WTC11 (cell line): ENCODE measurements at regions of chr1 and their contacts with region 1.

Region 1: DNA sequence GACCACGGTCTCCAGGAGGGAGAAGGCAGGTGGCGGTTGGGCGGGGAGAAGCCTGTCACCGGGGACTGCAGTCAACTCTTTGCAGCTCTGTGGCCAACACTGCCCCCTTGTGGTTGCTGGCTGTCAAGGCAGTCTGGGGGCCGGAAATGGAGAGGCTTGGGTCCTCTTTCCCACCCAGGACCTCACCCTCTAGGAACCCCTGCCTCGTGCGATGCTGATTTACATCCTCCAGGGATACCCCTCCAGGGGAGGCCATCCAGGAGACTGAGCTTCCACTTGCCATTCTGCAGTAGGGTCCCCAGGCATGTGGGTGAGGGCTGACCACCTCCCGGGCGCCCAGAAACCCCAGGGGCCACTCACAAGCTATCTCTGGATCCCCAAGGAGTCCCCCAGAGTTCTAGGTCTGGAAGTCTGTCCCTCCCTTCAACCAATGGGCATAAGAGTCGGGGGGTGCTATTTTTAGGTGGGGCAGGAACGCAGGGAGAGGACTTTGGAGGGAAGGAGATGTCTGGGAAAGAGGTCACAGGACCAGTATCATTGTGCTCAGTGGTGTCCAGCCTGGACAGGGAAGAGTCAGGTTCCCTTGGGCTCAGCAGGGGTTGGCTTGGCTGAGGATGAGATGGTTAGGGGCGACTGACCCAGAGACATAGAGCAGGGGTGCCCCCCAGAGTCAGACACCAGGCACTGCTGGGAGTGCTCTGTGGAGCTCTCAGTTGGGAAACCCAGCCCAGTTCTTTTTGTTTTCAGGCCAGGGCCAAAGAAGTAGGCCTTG is 7.1 kb upstream of the GPR61 start:
- DNase-seq: peak; percentile 96
- ATAC-seq: peak; percentile 91
- H3K4me3 Mint-ChIP-seq: peak overlapping the region; percentile 38; the same call in 1 of the 2 replicates
- H3K27ac Mint-ChIP-seq: peak overlapping the region; percentile 8; the same call in 1 of the 2 replicates
- H3K4me1 Mint-ChIP-seq: peaks cover 10% of the 10 kb centered on the region
- H3K27me3 Mint-ChIP-seq: peaks cover 8% of the 10 kb centered on the region
- CTCF ChIP-seq: peak; percentile 97

Region 2: GRCh38 chr1:109277434-109278204 is 254.9 kb before region 1 on chr1:
- CTCF ChIA-PET with region 1: interaction called, 18 read pairs
- POLR2A ChIA-PET with region 1: no interaction called
- DNase-seq: peak; percentile 91
- ATAC-seq: peak; percentile 86
- H3K4me3 Mint-ChIP-seq: no peak overlapping the region
- H3K27ac Mint-ChIP-seq: peak overlapping the region; percentile 85
- H3K4me1 Mint-ChIP-seq: peaks cover 37% of the 10 kb centered on the region
- H3K27me3 Mint-ChIP-seq: no peaks in the 10 kb centered on the region; the same call in 1 of the 2 replicates
- CTCF ChIP-seq: peak; percentile 95

Region 3: DNA sequence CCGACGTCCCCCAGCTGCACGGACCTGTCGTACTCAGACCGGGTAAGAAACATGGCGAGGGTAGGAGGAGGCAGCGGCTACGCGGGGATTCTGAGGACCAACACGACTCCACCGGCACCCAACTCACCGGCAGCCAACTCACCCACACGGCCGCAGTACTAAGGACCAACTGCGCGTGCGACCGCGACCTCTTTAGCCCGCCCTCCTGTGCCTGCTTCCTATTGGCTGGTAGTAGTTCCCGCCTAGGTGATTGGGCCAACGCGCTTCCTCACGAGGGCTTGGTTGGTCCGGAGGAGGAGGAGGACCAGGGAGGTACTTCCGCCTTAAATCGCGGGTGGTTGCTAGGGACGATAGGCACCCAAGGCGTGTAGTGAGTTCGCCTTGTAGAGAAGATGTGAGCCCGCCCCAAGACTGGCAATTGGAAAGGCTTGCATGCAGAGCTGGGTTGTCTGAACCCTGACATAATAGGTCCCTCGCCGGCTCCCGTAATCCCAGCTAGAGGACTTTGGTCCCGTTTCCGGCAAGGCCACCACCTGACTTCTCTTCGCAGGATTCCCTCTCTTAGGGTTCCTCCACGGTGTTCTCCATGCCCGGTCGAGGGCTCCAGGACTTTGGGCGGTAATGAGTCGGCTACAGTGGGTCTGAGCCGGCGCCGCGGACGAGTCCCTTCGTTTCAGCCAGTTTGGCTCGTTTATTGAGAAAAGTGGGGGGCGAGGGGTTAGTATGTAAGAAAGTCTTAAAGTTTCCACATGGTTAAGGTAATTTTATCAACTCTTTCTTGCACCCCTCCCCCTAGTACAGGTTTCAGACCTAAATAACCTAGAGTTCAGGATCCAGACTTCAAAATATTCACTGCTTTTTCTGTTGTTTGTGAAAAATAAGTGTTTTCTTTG is 106.0 kb before region 1 on chr1 and contains the start of gene PSMA5:
- CTCF ChIA-PET with region 1: interaction called, 14 read pairs
- POLR2A ChIA-PET with region 1: interaction called, 4 read pairs
- DNase-seq: peak; percentile 93
- ATAC-seq: peak; percentile 98
- H3K4me3 Mint-ChIP-seq: peak within 1 kb of the TSS; percentile 88
- H3K27ac Mint-ChIP-seq: peak within 1 kb of the TSS; percentile 90
- H3K4me1 Mint-ChIP-seq: peaks cover 27% of the 10 kb centered on the region
- H3K27me3 Mint-ChIP-seq: no peaks in the 10 kb centered on the region
- CTCF ChIP-seq: no peak
- total RNA-seq, gene PSMA5: 115 to 150 TPM (median 119 TPM) in 3 replicates

Region 4: DNA sequence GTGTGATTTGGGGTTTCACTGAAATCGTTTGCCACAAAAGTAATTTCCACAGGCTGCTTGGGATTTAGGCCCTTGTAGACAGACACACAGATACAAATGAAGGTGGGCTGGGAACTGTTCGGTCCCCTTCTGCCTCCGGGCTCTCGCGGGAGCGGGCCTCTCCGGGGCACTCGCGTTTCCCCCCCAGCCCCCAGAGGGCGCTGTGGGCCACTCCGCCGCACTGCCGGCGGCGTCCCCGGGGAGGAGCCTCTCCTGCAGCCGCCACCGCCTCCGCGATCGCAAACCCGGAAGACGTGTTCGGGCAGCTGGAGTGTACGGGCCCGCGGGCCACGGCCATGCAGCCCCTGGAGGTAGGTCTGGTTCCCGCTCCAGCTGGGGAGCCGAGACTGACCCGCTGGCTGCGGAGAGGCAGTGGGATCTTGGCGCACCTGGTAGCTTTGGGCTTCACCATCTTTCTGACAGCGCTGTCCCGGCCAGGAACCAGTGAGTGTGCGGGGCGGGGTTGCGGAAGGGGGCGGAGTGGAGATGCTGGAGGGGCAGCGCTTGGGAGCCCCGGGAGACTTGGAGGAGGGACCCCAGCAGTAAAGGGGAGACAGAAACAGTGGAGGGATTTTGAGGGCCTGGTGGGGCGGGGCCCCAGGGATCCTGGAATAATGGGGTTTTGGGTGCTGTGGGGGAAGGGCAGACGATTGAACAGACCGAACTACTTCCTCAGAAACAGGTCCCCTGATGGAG is 38.6 kb before region 1 on chr1 and contains the start of gene CYB561D1:
- CTCF ChIA-PET with region 1: interaction called, 740 read pairs
- POLR2A ChIA-PET with region 1: interaction called, 6 read pairs
- DNase-seq: peak; percentile 90
- ATAC-seq: peak; percentile 81
- H3K4me3 Mint-ChIP-seq: peak within 1 kb of the TSS; percentile 90
- H3K27ac Mint-ChIP-seq: 0 out of 2 replicates have a peak within 1 kb of the TSS, but pooled peaks have one; percentile 60
- H3K4me1 Mint-ChIP-seq: peaks cover 22% of the 10 kb centered on the region
- H3K27me3 Mint-ChIP-seq: no peaks in the 10 kb centered on the region
- CTCF ChIP-seq: peak; percentile 84
- total RNA-seq, gene CYB561D1: 5.1 to 6.7 TPM (median 6.5 TPM) in 3 replicates

Region 5: GRCh38 chr1:109516872-109517271 is 15.7 kb before region 1 on chr1:
- CTCF ChIA-PET with region 1: interaction called, 56 read pairs
- POLR2A ChIA-PET with region 1: no interaction called
- DNase-seq: no peak
- ATAC-seq: no peak
- H3K4me3 Mint-ChIP-seq: no peak overlapping the region
- H3K27ac Mint-ChIP-seq: no peak overlapping the region
- H3K4me1 Mint-ChIP-seq: no peaks in the 10 kb centered on the region
- H3K27me3 Mint-ChIP-seq: peaks cover 12% of the 10 kb centered on the region
- CTCF ChIP-seq: no peak

Region 6: GRCh38 chr1:109687616-109688499 is 155.3 kb after region 1 on chr1 and contains the start of gene GSTM1:
- CTCF ChIA-PET with region 1: no interaction called
- POLR2A ChIA-PET with region 1: no interaction called
- DNase-seq: no peak
- ATAC-seq: no peak
- H3K4me3 Mint-ChIP-seq: no peak within 1 kb of the TSS
- H3K27ac Mint-ChIP-seq: no peak within 1 kb of the TSS
- H3K4me1 Mint-ChIP-seq: no peaks in the 10 kb centered on the region
- H3K27me3 Mint-ChIP-seq: no peaks in the 10 kb centered on the region
- CTCF ChIP-seq: no peak
- total RNA-seq, gene GSTM1: not detected in 3 replicates

Region 7: GRCh38 chr1:109984456-109985275 is 452.1 kb after region 1 on chr1 and contains the start of gene AHCYL1:
- CTCF ChIA-PET with region 1: no interaction called
- POLR2A ChIA-PET with region 1: no interaction called
- DNase-seq: peak; percentile 99
- ATAC-seq: peak; percentile 93
- H3K4me3 Mint-ChIP-seq: peak within 1 kb of the TSS; percentile 96
- H3K27ac Mint-ChIP-seq: peak within 1 kb of the TSS; percentile 93
- H3K4me1 Mint-ChIP-seq: peaks cover 42% of the 10 kb centered on the region
- H3K27me3 Mint-ChIP-seq: no peaks in the 10 kb centered on the region; the same call in 1 of the 2 replicates
- CTCF ChIP-seq: peak; percentile 92
- total RNA-seq, gene AHCYL1: 92.1 to 99.4 TPM (median 98.6 TPM) in 3 replicates

Region 8: DNA sequence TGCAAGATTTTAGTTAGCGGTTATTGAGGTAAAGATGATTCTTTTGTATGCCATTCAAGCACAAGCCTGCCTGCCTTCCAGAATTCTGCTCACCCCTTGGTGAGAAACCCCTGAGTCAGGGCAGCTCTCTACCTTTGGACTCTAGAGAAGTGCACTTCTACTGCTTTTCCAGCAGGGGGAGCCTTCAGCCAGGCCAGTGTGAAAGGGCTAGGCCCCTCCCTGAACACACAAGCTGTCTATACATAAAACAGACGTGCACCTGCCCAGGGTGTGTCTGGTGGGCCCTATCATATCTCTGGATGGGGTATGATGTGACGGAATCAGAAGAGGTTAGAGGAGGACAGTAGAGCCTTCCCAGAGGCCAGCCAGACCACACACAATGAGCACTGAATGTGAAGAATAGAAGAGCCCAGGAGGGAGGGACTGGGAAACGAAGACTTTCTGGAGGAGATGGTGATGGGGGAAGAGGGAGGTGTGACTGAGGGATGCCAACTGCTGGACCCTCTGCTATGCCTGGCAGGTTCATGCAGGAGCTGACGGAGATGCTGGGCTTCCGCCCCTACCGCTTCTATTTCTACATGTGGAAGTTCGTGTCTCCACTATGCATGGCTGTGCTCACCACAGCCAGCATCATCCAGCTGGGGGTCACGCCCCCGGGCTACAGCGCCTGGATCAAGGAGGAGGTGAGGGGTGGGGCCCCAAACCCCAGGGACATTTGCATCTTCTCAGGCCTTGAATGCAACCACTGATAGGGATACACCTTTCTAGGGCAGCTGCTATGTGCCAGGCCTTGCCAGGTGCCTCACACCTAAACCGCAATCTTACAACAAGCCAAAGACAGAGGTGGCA is 664.6 kb after region 1 on chr1:
- CTCF ChIA-PET with region 1: no interaction called
- POLR2A ChIA-PET with region 1: no interaction called
- DNase-seq: peak; percentile 42
- ATAC-seq: peak; percentile 95
- H3K4me3 Mint-ChIP-seq: no peak overlapping the region
- H3K27ac Mint-ChIP-seq: no peak overlapping the region
- H3K4me1 Mint-ChIP-seq: peaks cover 2% of the 10 kb centered on the region; the same call in 1 of the 2 replicates
- H3K27me3 Mint-ChIP-seq: no peaks in the 10 kb centered on the region
- CTCF ChIP-seq: peak; percentile 87